ENCODE measurements at regions of chr12 and their contacts with region 1.

Region 1: DNA sequence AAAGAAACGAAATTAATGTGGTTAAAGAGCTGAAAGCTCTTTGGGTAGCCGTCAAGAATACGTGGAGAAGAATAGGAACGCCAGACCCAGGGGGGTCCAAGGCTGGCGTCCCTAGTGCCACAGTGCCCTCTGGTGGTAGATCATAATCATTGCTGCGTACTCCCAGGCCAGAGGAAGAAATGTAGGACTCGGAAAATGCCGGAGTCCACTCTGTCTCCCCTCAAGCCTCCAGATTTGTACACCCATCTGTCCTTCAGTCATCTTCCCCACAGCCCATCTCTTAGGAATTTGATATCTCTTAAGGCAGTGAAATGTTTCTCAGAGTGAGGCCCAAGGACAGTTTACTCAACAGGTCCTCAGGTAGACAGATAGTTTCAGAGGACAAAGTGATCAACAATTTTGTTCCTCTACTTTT is 25.4 kb upstream of the PLEKHG6 start:
- DNase-seq: no peak
- H3K4me3 ChIP-seq: no peak overlapping the region
- CTCF ChIP-seq: peak; percentile 73

Region 2: GRCh38 chr12:6056406-6057240 is 228.4 kb before region 1 on chr12:
- CTCF ChIA-PET with region 1: interaction called, 178 read pairs
- POLR2A ChIA-PET with region 1: interaction called, 3 read pairs
- DNase-seq: no peak
- H3K4me3 ChIP-seq: no peak overlapping the region
- CTCF ChIP-seq: peak; percentile 35

Region 3: GRCh38 chr12:6172086-6172485 is 113.0 kb before region 1 on chr12:
- CTCF ChIA-PET with region 1: no interaction called
- POLR2A ChIA-PET with region 1: no interaction called
- DNase-seq: no peak
- H3K4me3 ChIP-seq: no peak overlapping the region
- CTCF ChIP-seq: no peak

Region 4: DNA sequence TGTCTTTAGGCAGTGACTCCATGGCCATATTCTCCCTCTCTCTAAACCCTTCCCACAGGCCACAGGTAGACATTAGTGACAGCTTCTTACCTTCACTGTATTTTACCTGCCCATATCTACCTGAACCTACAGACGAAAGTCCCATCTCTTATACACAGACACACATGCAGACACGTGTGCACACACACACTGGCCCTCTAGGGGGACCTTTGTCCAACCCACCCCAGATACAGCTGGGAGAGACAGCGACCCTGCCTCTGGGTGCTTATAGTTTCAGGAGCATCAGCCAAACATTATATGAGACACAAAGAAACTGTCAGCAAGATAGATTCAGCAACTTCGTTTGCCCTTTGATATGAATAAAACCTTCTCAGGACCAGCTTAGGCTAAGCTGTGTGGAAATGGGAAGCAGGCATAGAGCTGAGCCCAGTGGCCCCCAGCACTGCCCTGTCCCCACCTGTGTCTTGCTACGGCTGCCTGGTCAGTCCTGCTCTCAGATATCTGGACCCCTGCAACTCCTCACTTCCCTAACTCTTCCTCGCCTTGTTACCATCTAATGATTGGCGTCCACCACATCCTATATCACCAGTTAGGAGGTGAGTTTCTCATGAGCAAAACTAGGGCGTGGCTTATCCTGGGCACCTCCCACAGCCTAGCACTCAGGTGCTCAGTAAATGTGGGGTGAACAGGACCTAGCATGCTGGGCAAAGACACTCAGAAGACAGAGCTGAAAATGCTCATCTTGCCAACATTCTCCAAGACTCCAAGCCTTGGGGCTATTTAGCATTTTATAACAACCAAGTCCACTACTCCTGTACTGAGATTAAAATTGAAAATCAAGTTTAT is 96.9 kb before region 1 on chr12:
- CTCF ChIA-PET with region 1: interaction called, 269 read pairs
- POLR2A ChIA-PET with region 1: no interaction called
- DNase-seq: no peak
- H3K4me3 ChIP-seq: no peak overlapping the region
- CTCF ChIP-seq: no peak

Region 5: DNA sequence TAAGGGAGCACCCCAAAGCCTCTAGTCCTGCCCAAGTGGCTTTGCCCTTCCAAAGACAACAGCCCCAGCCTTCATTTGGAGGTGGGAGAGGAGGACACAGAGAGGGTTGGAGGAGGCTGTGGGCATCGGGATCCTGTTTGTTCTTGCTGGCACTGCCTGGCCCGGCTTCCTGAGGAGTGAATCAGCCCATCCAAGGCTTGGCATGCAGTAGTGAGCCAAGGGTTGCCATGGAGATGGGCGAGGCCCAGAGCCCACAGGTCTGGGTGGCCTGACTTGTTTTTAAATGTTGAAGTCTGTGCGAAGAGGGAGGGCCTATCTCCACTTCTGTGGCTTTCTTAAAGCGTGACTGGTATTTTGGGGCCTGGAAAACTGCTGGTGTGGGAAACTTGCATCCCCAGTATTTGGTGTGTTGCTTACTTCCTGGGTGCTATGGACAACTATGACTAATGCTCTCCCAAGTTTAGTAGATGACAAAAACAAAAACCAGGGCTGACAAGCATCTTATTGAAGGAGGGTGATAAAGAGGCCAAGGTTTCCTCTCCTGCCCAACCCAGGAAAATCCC is 69.1 kb before region 1 on chr12:
- CTCF ChIA-PET with region 1: interaction called, 56 read pairs
- POLR2A ChIA-PET with region 1: no interaction called
- DNase-seq: peak; percentile 75
- H3K4me3 ChIP-seq: no peak overlapping the region
- CTCF ChIP-seq: no peak

Region 6: DNA sequence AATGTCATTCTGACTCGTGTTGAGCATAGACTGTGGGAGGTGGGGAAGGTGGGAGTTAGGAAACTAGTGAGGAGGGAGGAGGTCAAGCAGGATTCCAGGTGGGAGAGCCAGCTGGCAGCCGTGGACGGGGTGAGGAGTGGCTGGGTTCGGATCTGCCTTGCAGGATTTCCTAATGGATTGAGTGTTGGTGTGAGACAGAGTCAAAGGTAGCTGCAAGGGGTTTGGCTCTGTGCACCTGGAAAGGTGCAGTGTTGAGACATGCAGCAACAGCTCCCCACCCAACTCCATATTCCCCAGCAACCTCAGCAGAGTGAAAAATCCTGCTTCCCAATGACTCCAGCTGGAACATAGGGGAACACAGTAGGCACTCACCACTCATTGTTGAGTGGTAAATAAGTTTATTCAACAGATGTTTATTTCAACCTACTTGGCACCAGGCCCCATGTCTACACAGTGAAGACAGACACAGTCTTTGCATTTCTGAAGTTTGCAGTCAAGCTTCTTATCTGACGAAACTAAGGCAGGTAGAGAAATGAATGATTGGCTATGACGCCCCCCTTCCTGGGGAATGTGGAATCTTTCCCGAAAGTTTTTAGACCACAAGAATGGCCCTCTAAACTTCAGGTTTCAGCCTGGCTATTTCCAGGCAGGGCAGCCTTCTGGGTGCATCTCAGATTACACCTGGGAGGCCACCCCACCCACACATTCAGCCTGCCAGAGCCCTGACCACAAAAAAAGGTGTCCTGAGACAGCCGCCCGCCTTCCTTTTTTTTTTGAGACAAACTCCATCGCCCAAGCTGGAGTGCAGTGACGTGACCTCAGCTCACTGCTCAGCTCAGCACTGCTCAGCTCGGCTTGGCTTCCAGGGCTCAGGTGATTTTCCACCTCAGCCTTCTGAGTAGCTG is 12.5 kb before region 1 on chr12:
- CTCF ChIA-PET with region 1: interaction called, 36 read pairs
- POLR2A ChIA-PET with region 1: no interaction called
- DNase-seq: no peak
- H3K4me3 ChIP-seq: no peak overlapping the region
- CTCF ChIP-seq: no peak

Region 7: GRCh38 chr12:6489449-6489848 is 204.4 kb after region 1 on chr12:
- CTCF ChIA-PET with region 1: no interaction called
- POLR2A ChIA-PET with region 1: no interaction called
- DNase-seq: no peak
- H3K4me3 ChIP-seq: no peak overlapping the region
- CTCF ChIP-seq: no peak